Tibial artery (tissue), 4 donors: ENCODE measurements at regions of chr5 and their contacts with region 1.

Region 1: GRCh38 chr5:82635561-82636288 is 357.6 kb upstream of the RPS23 start:
- DNase-seq: no peak
- H3K4me3 ChIP-seq: no peak overlapping the region
- H3K27ac ChIP-seq: peak overlapping the region in 1 of 2 donors; percentile 18
- H3K4me1 ChIP-seq: peaks cover 0 to 38% (median 9%) of the 10 kb centered on the region in 4 donors
- H3K27me3 ChIP-seq: no peaks in the 10 kb centered on the region
- CTCF ChIP-seq: no peak

Region 2: DNA sequence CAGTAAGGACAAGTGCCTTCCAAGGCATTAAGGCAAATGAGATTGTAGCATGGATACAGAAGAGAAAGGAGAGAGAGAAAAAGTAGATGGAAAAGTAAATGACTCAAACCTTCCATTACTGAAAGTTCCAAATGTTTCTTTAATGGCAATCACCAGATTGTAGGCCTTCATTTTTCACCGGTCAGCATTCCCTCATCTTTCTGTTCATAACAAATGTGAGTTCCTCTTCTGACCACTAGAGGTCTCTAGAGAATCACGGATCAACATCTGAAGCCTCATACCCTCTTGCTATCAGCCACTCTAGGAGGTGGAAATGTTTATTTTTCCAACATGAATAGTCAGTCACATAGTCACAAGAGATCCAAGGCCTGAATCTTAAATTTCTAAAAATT is 284.0 kb before region 1 on chr5:
- intact Hi-C with region 1: loop called (anchors 10 kb)
- DNase-seq: no peak
- H3K4me3 ChIP-seq: no peak overlapping the region
- H3K27ac ChIP-seq: peak overlapping the region; percentile 68 to 77
- H3K4me1 ChIP-seq: peaks cover 0 to 64% (median 35%) of the 10 kb centered on the region in 4 donors
- H3K27me3 ChIP-seq: no peaks in the 10 kb centered on the region
- CTCF ChIP-seq: peak; percentile 75 to 93